Activated CD4-positive, alpha-beta memory T cell treated with anti-CD3 and anti-CD28 coated beads, Interleukin-2, amount 10 ng/mL, durations not matched to agents 7 days and 5 days (primary cell): ENCODE measurements at regions of chr22 and their contacts with region 1.

Region 1: GRCh38 chr22:30968924-30969539 is at the start of gene TUG1:
- DNase-seq: peak; percentile 98
- H3K4me3 Mint-ChIP-seq: peak within 1 kb of the TSS; percentile 95
- H3K27ac Mint-ChIP-seq: peak within 1 kb of the TSS; percentile 94
- H3K4me1 Mint-ChIP-seq: peaks cover 65% of the 10 kb centered on the region
- H3K27me3 Mint-ChIP-seq: no peaks in the 10 kb centered on the region
- total RNA-seq, gene TUG1: 71.2 to 72.5 TPM

Region 2: GRCh38 chr22:30742291-30743256 is 226.5 kb before region 1 on chr22:
- CTCF ChIA-PET with region 1: no interaction called
- POLR2A ChIA-PET with region 1: interaction called, 16 read pairs
- DNase-seq: peak; percentile 50
- H3K4me3 Mint-ChIP-seq: peak overlapping the region; percentile 21
- H3K27ac Mint-ChIP-seq: peak overlapping the region; percentile 90
- H3K4me1 Mint-ChIP-seq: peaks cover 83% of the 10 kb centered on the region
- H3K27me3 Mint-ChIP-seq: no peaks in the 10 kb centered on the region

Region 3: DNA sequence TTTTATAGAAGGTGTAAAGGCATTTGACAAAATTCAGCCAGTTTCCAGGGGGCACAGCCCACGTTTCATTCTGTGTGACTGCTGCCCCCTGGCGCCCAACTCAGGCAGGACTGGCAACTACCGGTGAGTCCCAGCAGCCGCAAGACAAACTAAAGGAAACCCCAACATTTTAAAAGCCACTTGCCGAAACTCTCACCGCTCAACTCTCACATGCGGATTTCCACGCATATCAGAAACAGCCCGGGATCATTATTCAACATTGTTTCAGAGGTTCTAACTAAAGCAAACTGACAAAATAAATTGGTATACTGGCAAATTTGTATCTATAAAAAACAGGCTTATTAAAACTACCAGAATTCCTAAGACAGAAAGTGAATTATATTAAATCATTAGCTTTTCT is 48.6 kb before region 1 on chr22:
- CTCF ChIA-PET with region 1: interaction called, 24 read pairs
- POLR2A ChIA-PET with region 1: interaction called, 41 read pairs
- DNase-seq: peak; percentile 82
- H3K4me3 Mint-ChIP-seq: peak overlapping the region; percentile 40
- H3K27ac Mint-ChIP-seq: no peak overlapping the region
- H3K4me1 Mint-ChIP-seq: peaks cover 15% of the 10 kb centered on the region
- H3K27me3 Mint-ChIP-seq: no peaks in the 10 kb centered on the region

Region 4: DNA sequence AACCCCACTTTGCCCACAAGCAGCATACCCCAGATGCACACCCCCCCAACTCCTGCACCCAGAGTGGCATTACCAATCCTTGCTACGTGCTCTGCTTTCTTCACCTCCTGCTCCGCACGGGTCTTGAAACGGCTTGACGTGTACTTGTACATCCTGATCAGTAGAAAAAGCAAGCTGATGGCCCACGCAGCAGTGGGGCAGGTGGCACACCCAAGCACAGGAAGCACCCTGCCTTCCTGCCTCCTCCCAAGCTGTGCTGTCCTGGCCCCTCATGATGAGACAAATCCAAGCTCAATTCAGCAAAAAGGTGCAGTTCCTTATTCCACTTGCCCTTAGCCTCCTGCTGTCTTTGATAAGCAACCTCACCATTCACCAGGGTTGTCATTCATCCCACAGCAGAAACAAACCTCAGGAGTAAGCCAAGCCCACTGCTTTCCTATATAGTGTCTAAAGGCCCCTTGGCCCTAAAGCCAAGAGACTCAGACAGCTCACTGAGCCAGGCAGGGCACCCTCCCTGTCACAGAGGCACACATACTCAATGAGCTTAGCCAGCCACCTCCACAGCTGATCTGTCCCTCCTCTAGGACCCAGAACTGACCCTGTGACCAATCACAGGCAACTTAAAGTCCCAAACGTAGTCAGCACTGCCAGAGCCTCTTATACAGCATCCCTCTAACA is 28.2 kb before region 1 on chr22:
- CTCF ChIA-PET with region 1: interaction called, 11 read pairs
- POLR2A ChIA-PET with region 1: interaction called, 45 read pairs
- DNase-seq: peak; percentile 62
- H3K4me3 Mint-ChIP-seq: peak overlapping the region; percentile 77
- H3K27ac Mint-ChIP-seq: peak overlapping the region; percentile 91
- H3K4me1 Mint-ChIP-seq: peaks cover 78% of the 10 kb centered on the region
- H3K27me3 Mint-ChIP-seq: no peaks in the 10 kb centered on the region

Region 5: DNA sequence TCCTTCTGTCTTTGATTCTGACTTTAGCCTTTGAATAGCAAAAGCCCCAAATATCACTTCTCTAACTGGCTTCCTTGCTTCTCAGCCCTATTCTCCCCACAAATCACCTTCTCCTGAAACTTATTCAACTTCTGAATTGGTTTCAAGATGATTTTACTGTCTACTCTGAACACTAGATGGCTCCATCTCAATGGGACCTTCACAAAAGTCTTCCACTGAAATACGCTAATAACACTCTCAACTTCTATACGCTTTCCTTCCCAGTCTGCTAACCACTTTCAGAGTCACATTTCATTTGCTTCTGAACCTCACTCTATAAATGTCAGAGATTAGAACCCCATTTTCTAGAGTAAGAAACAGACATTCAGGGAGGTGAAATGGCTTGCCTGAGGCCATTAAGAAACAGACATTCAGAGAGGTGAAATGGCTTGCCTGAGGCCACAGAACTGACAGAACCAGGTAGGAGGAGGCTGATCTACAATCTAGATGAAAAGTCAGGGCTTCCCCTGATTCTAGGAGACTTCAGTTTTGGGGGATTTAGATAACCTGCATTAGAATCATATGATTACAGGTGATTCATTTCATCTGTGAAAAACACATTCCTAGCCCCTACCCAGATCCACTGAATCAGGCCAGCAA is 21.1 kb before region 1 on chr22:
- CTCF ChIA-PET with region 1: interaction called, 7 read pairs
- POLR2A ChIA-PET with region 1: interaction called, 26 read pairs
- DNase-seq: no peak
- H3K4me3 Mint-ChIP-seq: no peak overlapping the region
- H3K27ac Mint-ChIP-seq: no peak overlapping the region
- H3K4me1 Mint-ChIP-seq: peaks cover 59% of the 10 kb centered on the region
- H3K27me3 Mint-ChIP-seq: no peaks in the 10 kb centered on the region

Region 6: GRCh38 chr22:31020334-31020733 is 51.3 kb after region 1 on chr22:
- CTCF ChIA-PET with region 1: no interaction called
- POLR2A ChIA-PET with region 1: no interaction called
- DNase-seq: no peak
- H3K4me3 Mint-ChIP-seq: no peak overlapping the region
- H3K27ac Mint-ChIP-seq: no peak overlapping the region
- H3K4me1 Mint-ChIP-seq: no peaks in the 10 kb centered on the region
- H3K27me3 Mint-ChIP-seq: peaks cover 2% of the 10 kb centered on the region

Region 7: GRCh38 chr22:31046539-31047226 is 77.7 kb after region 1 on chr22:
- CTCF ChIA-PET with region 1: no interaction called
- POLR2A ChIA-PET with region 1: no interaction called
- DNase-seq: no peak
- H3K4me3 Mint-ChIP-seq: no peak overlapping the region
- H3K27ac Mint-ChIP-seq: no peak overlapping the region
- H3K4me1 Mint-ChIP-seq: no peaks in the 10 kb centered on the region
- H3K27me3 Mint-ChIP-seq: no peaks in the 10 kb centered on the region

Region 8: GRCh38 chr22:31080848-31081649 is 112.0 kb after region 1 on chr22 and contains the start of gene SMTN:
- CTCF ChIA-PET with region 1: interaction called, 13 read pairs
- POLR2A ChIA-PET with region 1: interaction called, 40 read pairs
- DNase-seq: peak; percentile 90
- H3K4me3 Mint-ChIP-seq: peak within 1 kb of the TSS; percentile 85
- H3K27ac Mint-ChIP-seq: peak within 1 kb of the TSS; percentile 14
- H3K4me1 Mint-ChIP-seq: peaks cover 38% of the 10 kb centered on the region
- H3K27me3 Mint-ChIP-seq: no peaks in the 10 kb centered on the region
- total RNA-seq, gene SMTN: 36.4 to 41.4 TPM

Region 9: GRCh38 chr22:31160328-31160978 is 191.4 kb after region 1 on chr22:
- CTCF ChIA-PET with region 1: no interaction called
- POLR2A ChIA-PET with region 1: interaction called, 11 read pairs
- DNase-seq: peak; percentile 26
- H3K4me3 Mint-ChIP-seq: peak overlapping the region; percentile 100
- H3K27ac Mint-ChIP-seq: peak overlapping the region; percentile 96
- H3K4me1 Mint-ChIP-seq: peaks cover 34% of the 10 kb centered on the region
- H3K27me3 Mint-ChIP-seq: peaks cover 2% of the 10 kb centered on the region